ENCODE measurements at regions of chr1 and their contacts with region 1.

Region 1: DNA sequence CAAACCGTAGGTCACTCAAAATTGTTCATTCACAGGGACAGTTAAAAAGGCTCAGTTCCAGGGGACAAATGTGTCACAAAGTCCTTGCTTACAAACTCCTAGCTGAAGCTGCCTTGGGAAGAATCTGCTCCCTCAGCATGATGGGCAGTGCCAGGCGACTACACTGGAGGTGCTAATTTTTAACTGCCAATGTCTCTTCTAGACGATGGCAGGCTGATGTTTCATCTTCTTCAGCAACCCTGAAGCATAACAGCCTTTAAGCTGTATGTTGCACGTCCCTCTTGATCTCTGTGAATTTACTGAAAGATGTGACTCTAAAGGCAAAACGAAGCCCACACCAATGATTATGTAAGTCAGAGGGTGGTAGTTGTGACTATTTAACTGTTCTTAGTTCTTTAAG is 11.3 kb downstream of the COA7 start:
- DNase-seq: no peak
- ATAC-seq: no peak
- H3K4me3 Mint-ChIP-seq: no peak overlapping the region
- H3K27ac Mint-ChIP-seq: no peak overlapping the region
- H3K4me1 Mint-ChIP-seq: peaks cover 21% of the 10 kb centered on the region
- H3K27me3 Mint-ChIP-seq: no peaks in the 10 kb centered on the region

Region 2: DNA sequence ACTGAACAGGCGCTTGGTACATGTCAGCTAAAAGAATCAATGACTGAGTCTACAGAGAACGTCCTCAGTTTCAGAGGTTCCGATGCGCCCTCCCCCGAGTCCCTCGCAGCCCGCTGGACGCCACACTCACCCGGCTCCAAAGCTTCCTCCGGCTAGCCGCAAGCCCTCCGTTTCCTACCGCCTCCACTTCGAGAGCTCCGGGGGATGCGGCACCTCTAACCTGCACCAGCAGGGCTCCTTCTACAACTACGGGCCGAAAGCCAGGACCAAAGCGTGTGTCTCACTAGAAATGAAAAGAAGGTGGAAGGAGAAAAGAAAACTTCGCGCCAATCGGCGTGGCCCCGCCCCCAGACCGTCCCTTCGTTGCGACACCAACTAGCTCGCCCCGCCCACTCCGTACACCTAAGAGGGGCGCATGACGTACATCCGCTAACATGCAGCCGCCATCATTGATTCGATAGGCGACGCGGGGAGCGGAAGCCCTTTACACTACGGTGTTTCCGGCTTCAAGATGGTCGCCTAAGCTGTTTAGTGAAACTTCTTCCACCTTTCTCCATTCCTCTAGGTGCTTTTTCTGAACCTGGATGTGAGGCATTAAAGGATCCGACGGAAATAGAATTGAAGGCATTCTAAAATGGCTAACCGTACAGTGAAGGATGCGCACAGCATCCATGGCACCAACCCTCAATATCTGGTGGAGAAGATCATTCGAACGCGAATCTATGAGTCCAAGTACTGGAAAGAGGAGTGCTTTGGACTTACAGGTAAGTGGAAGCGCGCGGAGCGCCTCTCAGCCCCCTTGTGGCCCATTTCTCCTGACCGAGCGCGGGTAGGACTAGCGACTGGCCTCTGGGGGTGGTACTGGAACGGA is 282.5 kb before region 1 on chr1 and contains the starts of genes ORC1 and PRPF38A:
- CTCF ChIA-PET with region 1: interaction called, 18 read pairs
- DNase-seq: peak; percentile 99
- ATAC-seq: peak; percentile 90
- H3K4me3 Mint-ChIP-seq: peak within 1 kb of the TSS; percentile 100
- H3K27ac Mint-ChIP-seq: peak within 1 kb of the TSS; percentile 100
- H3K4me1 Mint-ChIP-seq: peaks cover 60% of the 10 kb centered on the region
- H3K27me3 Mint-ChIP-seq: no peaks in the 10 kb centered on the region
- total RNA-seq, gene ORC1: 40.5 to 42.2 TPM
- total RNA-seq, gene PRPF38A: 87.0 to 97.4 TPM

Region 3: GRCh38 chr1:52424231-52424636 is 262.6 kb before region 1 on chr1:
- CTCF ChIA-PET with region 1: interaction called, 11 read pairs
- DNase-seq: peak; percentile 47
- ATAC-seq: peak; percentile 88
- H3K4me3 Mint-ChIP-seq: peak overlapping the region; percentile 55
- H3K27ac Mint-ChIP-seq: peak overlapping the region; percentile 92
- H3K4me1 Mint-ChIP-seq: peaks cover 38% of the 10 kb centered on the region
- H3K27me3 Mint-ChIP-seq: no peaks in the 10 kb centered on the region

Region 4: GRCh38 chr1:52552505-52553361 is 134.1 kb before region 1 on chr1 and contains the start of gene TUT4:
- CTCF ChIA-PET with region 1: interaction called, 11 read pairs
- DNase-seq: peak; percentile 85
- ATAC-seq: peak; percentile 71
- H3K4me3 Mint-ChIP-seq: peak within 1 kb of the TSS; percentile 59
- H3K27ac Mint-ChIP-seq: peak within 1 kb of the TSS; percentile 64
- H3K4me1 Mint-ChIP-seq: peaks cover 16% of the 10 kb centered on the region
- H3K27me3 Mint-ChIP-seq: no peaks in the 10 kb centered on the region
- total RNA-seq, gene TUT4: 60.4 to 76.5 TPM

Region 5: DNA sequence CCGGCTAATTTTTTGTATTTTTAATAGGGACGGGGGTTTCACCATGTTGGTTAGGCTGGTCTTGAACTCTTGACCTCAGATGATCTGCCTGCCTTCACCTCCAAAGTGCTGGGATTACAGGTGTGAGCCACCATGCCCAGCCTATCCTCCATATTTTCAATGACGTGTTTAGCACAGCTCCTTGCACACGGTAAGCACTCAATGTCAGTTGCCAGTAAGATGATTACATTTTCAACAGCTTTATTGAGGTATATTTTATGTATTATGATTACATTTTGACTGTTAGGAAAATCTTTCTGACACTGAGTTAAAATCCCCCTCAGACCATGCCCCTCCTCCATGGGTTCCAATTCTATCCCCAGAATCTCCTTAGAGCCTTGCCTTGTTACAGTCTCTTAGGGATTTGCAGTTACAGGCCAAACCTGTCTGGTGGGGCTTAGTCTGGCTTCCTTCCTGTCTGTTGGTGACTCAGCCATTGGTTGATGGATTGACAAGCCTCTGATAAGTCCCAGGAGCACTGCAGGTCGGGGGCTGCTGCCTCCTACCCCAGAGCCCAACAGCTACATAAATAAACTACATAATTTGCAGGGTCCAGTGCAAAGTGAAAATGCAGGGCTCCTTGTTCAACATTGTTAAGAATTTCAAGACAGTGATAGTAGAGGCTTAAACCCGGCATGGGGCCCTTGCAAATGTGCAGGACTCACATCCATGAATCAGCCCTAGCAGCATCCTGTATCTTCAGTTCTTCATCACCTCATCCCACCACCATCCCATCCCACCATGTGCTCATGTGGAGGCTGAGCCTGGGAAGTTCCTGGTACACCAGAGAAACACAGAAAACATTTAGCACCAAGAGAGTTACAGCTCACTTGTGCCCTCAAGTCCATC is 12.1 kb before region 1 on chr1:
- CTCF ChIA-PET with region 1: interaction called, 18 read pairs
- DNase-seq: peak; percentile 49
- ATAC-seq: peak; percentile 79
- H3K4me3 Mint-ChIP-seq: no peak overlapping the region
- H3K27ac Mint-ChIP-seq: peak overlapping the region; percentile 59
- H3K4me1 Mint-ChIP-seq: peaks cover 13% of the 10 kb centered on the region
- H3K27me3 Mint-ChIP-seq: no peaks in the 10 kb centered on the region

Region 6: DNA sequence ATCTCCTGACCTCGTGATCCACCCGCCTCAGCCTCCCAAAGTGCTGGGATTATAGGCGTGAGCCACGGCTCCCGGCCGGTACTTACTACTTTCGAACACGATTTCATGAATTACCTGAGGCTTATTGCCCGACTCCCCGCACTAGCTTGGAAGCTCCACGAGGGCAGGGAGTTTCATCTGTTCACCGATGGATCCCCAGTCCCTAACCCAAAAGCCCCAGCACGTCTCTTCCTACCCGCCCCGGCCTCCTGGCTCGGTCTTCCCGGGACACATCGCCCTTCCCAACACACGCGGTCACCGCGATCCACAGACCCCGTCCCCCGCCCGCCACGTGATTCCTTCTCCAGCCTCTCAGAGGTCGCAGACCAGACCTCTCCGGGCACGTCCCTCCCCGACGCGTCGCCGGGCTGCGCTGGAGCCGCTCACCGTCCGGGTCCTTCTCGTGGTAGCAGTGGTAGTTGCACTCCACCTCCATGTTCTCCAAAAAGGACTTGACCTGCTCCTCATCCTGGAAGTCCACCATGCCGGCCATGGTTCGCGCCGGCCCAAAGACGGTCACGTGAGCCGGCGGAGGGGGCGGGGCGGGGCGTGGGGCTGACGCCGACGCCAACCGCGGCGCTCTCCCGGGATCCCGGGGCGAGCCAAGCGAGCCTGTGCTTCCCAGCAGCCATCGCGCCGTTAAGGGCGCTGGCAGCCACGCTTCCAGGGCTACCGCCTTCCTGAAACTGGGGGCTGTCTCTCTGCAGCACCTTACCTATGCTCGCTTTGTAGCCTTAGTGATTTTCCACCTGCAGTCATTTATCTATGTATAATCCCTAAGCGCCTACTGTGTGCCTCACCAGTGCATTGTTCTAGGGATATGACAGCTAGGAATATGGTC is 11.2 kb after region 1 on chr1 and contains the start of gene COA7:
- CTCF ChIA-PET with region 1: interaction called, 13 read pairs
- DNase-seq: peak; percentile 77
- ATAC-seq: peak; percentile 59
- H3K4me3 Mint-ChIP-seq: peak within 1 kb of the TSS; percentile 94
- H3K27ac Mint-ChIP-seq: peak within 1 kb of the TSS; percentile 92
- H3K4me1 Mint-ChIP-seq: peaks cover 35% of the 10 kb centered on the region
- H3K27me3 Mint-ChIP-seq: peaks cover 3% of the 10 kb centered on the region
- total RNA-seq, gene COA7: 16.1 to 26.3 TPM

Measured in activated CD8-positive, alpha-beta memory T cell treated with anti-CD3 and anti-CD28 coated beads, Interleukin-2, amount 10 ng/mL, durations not matched to agents 7 days and 5 days (primary cell).